ENCODE measurements at regions of chr3 and their contacts with region 1.

Region 1: DNA sequence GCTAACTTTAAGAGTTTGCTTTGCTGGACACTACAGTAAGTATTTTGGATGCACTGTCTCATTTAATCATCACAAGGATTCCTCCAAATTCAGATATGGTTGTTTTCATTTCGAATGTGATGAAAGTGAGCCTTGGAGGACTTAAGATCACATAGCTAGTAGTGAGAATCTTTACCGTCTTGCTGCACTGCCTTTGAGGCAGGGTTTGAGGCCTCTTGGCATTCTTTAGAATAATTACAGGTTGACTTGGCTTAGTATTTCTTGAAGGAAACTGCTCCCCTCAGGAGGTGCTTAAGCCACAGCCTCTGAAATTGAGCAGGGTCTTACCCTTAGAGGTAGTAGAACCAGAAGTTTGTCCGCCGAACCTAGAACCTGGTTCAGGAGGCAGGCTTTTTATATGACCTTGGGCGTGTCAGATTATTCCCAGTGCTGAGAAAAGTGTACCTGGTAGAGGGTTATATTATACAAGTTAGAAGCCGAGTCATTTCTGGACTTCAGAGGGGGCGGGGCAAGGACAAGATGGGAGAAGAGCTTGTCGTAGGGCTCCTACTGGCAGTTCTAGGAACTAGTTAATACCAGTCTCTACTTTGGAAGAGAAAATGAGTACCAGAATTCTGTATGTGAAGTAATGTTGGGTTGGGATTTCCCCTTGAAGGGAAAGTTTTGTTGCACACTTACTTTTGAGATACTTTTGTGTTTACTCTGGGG is 1.1 kb downstream of the TFG start:
- DNase-seq: peak; percentile 37
- ATAC-seq: peak in 1 of 2 donors; percentile 8

Region 2: DNA sequence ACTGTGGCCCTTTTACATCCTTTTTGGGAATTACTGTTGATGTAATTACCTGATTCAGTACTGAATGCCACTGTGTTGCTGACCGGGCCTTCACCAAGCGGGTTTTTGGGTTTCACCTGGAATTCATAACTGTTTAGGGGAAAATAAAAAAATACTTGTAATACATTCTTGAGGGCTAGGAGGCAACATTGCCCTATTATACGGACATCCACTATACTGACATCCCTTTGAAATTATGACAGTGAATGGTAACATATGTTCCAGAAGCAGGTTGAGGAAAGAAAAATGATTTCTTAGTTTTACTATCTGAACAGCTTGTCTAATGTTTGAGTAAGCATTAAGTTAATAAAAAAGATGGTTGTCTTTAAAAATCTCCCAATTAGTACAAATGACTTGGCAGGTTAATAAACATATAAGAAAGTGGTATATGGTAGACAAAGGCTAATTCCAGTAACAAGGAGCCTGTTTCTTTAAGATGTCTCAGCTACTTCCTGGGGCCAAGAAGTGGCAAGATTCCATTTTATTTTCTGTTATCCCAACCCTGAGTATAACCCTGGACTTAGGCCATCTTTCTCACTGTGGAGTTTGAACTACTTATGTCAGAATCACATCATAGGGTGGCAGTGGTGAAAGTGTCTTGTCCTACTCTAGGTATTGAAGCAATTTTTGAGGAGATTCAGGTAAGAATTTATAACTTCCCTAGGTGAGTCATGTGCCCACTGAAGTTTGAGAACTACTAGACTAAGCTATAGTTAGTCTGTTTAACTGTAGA is 44.3 kb after region 1 on chr3:
- intact Hi-C with region 1: loop called in 1 of 2 experiments (anchors 5 kb)
- DNase-seq: no peak
- ATAC-seq: peak in 1 of 2 donors; percentile 56